ENCODE measurements at regions of chr16 and their contacts with region 1.

Region 1: GRCh38 chr16:28218104-28218503 is 6.3 kb upstream of the XPO6 start:
- DNase-seq: peak; percentile 67 to 81 (median 77)
- H3K4me3 ChIP-seq: no peak overlapping the region
- H3K4me3 Mint-ChIP-seq: no peak overlapping the region
- H3K27ac ChIP-seq: no peak overlapping the region
- H3K27ac Mint-ChIP-seq: peak overlapping the region; percentile 47 to 90 (median 63)
- H3K4me1 ChIP-seq: no peaks in the 10 kb centered on the region
- H3K4me1 Mint-ChIP-seq: peaks cover 2 to 7% (median 5%) of the 10 kb centered on the region in 4 donors
- H3K27me3 ChIP-seq: no peaks in the 10 kb centered on the region
- H3K27me3 Mint-ChIP-seq: no peaks in the 10 kb centered on the region

Region 2: DNA sequence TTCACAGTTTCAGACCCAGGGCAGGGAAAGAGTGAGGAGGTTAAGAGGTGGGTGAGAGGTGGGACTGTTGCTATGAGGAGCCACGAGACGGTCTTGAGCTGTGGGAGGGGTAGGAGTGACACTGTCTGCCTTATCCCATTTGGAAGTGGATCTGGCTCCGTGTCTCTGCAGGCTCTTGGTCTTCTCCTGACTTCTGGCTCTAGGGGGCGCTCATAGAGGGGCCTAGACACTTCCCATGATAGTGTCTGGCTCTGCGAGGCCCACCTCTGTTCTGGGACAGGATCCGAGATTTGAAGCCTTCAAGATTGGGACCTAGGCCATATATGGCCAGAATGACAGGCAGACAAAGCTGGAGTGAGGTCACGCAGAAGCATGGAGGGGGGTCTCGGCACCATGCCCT is 359.1 kb before region 1 on chr16:
- CTCF ChIA-PET with region 1: no interaction called
- POLR2A ChIA-PET with region 1: no interaction called
- intact Hi-C with region 1: no loop called
- DNase-seq: no peak
- H3K4me3 ChIP-seq: no peak overlapping the region
- H3K4me3 Mint-ChIP-seq: no peak overlapping the region
- H3K27ac ChIP-seq: no peak overlapping the region
- H3K27ac Mint-ChIP-seq: no peak overlapping the region
- H3K4me1 ChIP-seq: no peaks in the 10 kb centered on the region
- H3K4me1 Mint-ChIP-seq: no peaks in the 10 kb centered on the region
- H3K27me3 ChIP-seq: no peaks in the 10 kb centered on the region
- H3K27me3 Mint-ChIP-seq: peaks cover 1 to 9% of the 10 kb centered on the region in 2 donors

Region 3: DNA sequence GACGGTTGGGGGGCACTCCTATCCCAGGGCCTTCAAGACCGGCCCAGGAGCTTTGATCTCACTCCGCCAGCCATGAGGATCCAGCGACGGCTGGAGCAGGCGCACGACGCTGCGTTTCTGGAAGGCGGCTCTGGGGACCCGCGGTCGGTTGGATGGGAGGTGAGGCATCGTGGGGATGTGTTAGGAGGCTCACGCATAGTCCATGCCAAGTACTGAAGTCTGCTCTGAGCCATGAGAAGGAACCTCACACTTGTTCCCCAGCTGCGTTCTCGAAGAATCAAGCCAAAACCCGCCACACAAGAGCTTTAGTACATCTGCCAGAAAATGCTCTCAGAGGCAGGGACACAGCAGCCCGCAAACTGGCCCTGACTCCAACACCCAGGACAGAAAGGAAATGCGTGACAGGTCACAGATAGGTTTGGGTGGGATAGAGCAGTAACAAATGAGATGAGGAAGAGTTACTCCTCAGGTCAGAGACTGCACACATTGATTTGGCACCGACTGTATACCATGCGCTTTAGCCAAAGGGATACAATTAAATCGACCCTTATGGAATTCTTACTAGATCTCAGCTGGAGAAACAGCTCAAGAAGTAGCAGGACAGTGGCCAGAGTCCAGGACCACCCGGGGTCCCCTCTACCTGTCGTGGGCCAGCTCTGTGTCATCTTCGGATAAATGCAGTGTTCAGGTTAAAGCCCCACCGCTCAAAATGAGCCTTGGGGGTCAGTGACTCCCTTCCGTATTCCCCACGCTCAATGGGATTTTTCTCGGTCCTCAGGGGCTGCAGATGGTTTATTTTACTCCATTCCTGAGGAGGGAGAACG is 147.9 kb before region 1 on chr16:
- CTCF ChIA-PET with region 1: interaction called, 23 read pairs
- POLR2A ChIA-PET with region 1: no interaction called
- intact Hi-C with region 1: no loop called
- DNase-seq: no peak
- H3K4me3 ChIP-seq: no peak overlapping the region
- H3K4me3 Mint-ChIP-seq: no peak overlapping the region
- H3K27ac ChIP-seq: no peak overlapping the region
- H3K27ac Mint-ChIP-seq: no peak overlapping the region
- H3K4me1 ChIP-seq: no peaks in the 10 kb centered on the region
- H3K4me1 Mint-ChIP-seq: peaks cover 0 to 2% (median under 1%) of the 10 kb centered on the region in 4 donors
- H3K27me3 ChIP-seq: no peaks in the 10 kb centered on the region
- H3K27me3 Mint-ChIP-seq: peaks cover 4% of the 10 kb centered on the region in 2 donors

Region 4: DNA sequence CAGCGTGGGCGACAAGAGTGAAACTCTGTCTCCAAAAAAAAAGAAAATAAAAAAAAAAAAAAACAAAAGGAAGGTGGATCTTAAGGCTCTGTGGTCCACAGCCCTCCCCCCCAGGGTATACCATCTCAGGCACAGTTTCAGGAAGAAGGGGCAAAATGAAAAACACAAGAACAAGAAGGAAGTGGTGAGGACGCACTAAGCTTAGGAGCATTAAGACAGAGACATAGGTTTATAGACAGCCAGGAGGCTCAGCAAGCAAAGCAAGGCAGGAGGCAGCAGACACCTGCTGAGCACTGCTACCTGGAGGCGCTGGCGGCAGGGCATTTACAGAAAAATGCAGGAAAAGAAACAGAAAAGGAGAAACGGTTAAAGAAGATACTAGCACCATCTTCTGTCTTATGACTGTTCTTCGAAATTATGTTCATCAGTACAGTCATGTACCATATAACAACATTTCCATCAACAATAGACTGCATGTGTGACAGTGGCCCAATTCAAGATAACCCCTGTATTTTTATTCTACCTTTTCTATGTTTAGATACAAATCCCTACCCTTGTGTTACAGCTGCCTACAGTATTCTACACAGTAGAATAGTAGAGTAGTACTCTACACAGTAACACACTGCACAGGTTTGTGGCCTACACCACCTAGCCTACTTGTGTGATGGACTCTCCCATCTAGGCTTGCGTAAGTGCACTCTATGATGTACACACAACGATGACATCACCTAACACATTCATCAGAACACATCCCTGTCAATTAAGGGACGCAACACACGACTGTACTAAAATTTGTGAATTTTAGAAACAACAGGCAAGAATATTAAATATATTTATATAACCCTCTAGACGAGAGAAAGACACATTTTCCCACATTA is 68.9 kb before region 1 on chr16:
- CTCF ChIA-PET with region 1: interaction called, 51 read pairs
- POLR2A ChIA-PET with region 1: interaction called, 301 read pairs
- intact Hi-C with region 1: no loop called
- DNase-seq: peak in 4 of 5 donors; percentile 41 to 50 (median 48)
- H3K4me3 ChIP-seq: peak overlapping the region in 1 of 2 donors; percentile 6
- H3K4me3 Mint-ChIP-seq: peak overlapping the region; percentile 28 to 73 (median 66)
- H3K27ac ChIP-seq: peak overlapping the region; percentile 18
- H3K27ac Mint-ChIP-seq: peak overlapping the region; percentile 81 to 95 (median 91)
- H3K4me1 ChIP-seq: peaks cover 57% of the 10 kb centered on the region
- H3K4me1 Mint-ChIP-seq: peaks cover 52 to 83% (median 71%) of the 10 kb centered on the region in 4 donors
- H3K27me3 ChIP-seq: no peaks in the 10 kb centered on the region
- H3K27me3 Mint-ChIP-seq: no peaks in the 10 kb centered on the region

Region 5: GRCh38 chr16:28188085-28188916 is 29.8 kb before region 1 on chr16:
- CTCF ChIA-PET with region 1: interaction called, 37 read pairs
- POLR2A ChIA-PET with region 1: interaction called, 229 read pairs
- intact Hi-C with region 1: no loop called
- DNase-seq: peak in 1 of 5 donors; percentile 32
- H3K4me3 ChIP-seq: no peak overlapping the region
- H3K4me3 Mint-ChIP-seq: peak overlapping the region; percentile 67 to 89 (median 80)
- H3K27ac ChIP-seq: peak overlapping the region; percentile 50
- H3K27ac Mint-ChIP-seq: peak overlapping the region; percentile 91 to 98 (median 93)
- H3K4me1 ChIP-seq: peaks cover 97% of the 10 kb centered on the region
- H3K4me1 Mint-ChIP-seq: peaks cover 75 to 97% (median 87%) of the 10 kb centered on the region in 4 donors
- H3K27me3 ChIP-seq: no peaks in the 10 kb centered on the region
- H3K27me3 Mint-ChIP-seq: no peaks in the 10 kb centered on the region

Region 6: GRCh38 chr16:28202147-28202746 is 15.9 kb before region 1 on chr16:
- CTCF ChIA-PET with region 1: interaction called, 14 read pairs
- POLR2A ChIA-PET with region 1: interaction called, 5 read pairs
- intact Hi-C with region 1: no loop called
- DNase-seq: peak in 1 of 5 donors; percentile 61
- H3K4me3 ChIP-seq: no peak overlapping the region
- H3K4me3 Mint-ChIP-seq: peak overlapping the region in 6 of 8 donors; percentile 1 to 67 (median 52)
- H3K27ac ChIP-seq: peak overlapping the region; percentile 29
- H3K27ac Mint-ChIP-seq: peak overlapping the region in 3 of 7 donors; percentile 61 to 88 (median 82)
- H3K4me1 ChIP-seq: peaks cover 67% of the 10 kb centered on the region
- H3K4me1 Mint-ChIP-seq: peaks cover 31 to 42% (median 33%) of the 10 kb centered on the region in 4 donors
- H3K27me3 ChIP-seq: no peaks in the 10 kb centered on the region
- H3K27me3 Mint-ChIP-seq: no peaks in the 10 kb centered on the region

Measured in CD4-positive, alpha-beta memory T cell (primary cell).